CD4-positive, alpha-beta memory T cell (primary cell): ENCODE measurements at regions of chr11 and their contacts with region 1.

Region 1: DNA sequence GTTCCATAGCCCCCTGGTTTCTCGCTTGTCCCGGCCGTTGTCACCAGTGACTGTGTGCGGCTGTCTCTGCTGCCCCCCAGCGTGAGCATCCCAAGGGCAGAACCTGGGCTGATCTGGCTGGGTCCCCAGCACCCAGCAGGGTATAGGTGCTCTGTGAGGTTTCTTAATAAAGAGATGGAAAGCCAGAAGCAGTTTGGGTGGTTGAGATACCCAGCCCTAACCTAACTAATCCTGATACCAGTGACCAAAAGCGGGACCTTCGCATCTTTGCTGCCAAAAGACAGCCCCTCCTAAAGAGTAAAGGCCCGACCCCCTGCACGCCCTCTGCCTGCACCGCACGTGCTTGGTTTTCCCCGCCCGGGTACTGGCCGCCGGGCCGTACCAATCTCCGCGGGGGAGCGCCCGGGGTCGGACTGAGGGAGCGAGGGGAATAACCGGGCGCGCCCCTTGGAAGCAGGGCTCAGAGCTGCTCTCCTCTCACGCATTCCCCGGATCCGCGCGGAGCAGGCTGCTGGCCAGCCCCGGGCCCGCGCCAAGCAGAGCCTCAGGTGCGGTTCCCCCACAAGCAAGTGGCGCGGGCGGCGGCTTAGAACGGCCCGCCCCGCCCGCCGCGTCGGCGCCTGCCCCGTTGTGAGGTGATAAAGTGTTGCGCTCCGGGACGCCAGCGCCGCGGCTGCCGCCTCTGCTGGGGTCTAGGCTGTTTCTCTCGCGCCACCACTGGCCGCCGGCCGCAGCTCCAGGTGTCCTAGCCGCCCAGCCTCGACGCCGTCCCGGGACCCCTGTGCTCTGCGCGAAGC is at the start of gene DGAT2:
- DNase-seq: peak; percentile 50 to 72 (median 66)
- H3K4me3 ChIP-seq: peak within 1 kb of the TSS; percentile 42 to 58
- H3K4me3 Mint-ChIP-seq: peak within 1 kb of the TSS; percentile 70 to 87 (median 76)
- H3K27ac ChIP-seq: no peak within 1 kb of the TSS
- H3K27ac Mint-ChIP-seq: peak within 1 kb of the TSS in 5 of 7 donors; percentile 45 to 74 (median 67)
- H3K4me1 ChIP-seq: peaks cover 21% of the 10 kb centered on the region
- H3K4me1 Mint-ChIP-seq: peaks cover 2 to 19% (median 9%) of the 10 kb centered on the region in 4 donors
- H3K27me3 ChIP-seq: peaks cover 3% of the 10 kb centered on the region
- H3K27me3 Mint-ChIP-seq: peaks cover 3 to 9% of the 10 kb centered on the region in 2 donors
- total RNA-seq, gene DGAT2: 0.17 to 0.35 TPM

Region 2: GRCh38 chr11:75721855-75722668 is 46.2 kb before region 1 on chr11:
- CTCF ChIA-PET with region 1: interaction called, 4 read pairs
- POLR2A ChIA-PET with region 1: no interaction called
- intact Hi-C with region 1: loop called (anchors 1 kb)
- DNase-seq: no peak
- H3K4me3 ChIP-seq: no peak overlapping the region
- H3K4me3 Mint-ChIP-seq: no peak overlapping the region
- H3K27ac ChIP-seq: no peak overlapping the region
- H3K27ac Mint-ChIP-seq: peak overlapping the region in 1 of 7 donors; percentile 60
- H3K4me1 ChIP-seq: no peaks in the 10 kb centered on the region
- H3K4me1 Mint-ChIP-seq: no peaks in the 10 kb centered on the region
- H3K27me3 ChIP-seq: no peaks in the 10 kb centered on the region
- H3K27me3 Mint-ChIP-seq: no peaks in the 10 kb centered on the region